Motor neuron (in vitro differentiated cells): ENCODE measurements at regions of chr21 and their contacts with region 1.

Region 1: DNA sequence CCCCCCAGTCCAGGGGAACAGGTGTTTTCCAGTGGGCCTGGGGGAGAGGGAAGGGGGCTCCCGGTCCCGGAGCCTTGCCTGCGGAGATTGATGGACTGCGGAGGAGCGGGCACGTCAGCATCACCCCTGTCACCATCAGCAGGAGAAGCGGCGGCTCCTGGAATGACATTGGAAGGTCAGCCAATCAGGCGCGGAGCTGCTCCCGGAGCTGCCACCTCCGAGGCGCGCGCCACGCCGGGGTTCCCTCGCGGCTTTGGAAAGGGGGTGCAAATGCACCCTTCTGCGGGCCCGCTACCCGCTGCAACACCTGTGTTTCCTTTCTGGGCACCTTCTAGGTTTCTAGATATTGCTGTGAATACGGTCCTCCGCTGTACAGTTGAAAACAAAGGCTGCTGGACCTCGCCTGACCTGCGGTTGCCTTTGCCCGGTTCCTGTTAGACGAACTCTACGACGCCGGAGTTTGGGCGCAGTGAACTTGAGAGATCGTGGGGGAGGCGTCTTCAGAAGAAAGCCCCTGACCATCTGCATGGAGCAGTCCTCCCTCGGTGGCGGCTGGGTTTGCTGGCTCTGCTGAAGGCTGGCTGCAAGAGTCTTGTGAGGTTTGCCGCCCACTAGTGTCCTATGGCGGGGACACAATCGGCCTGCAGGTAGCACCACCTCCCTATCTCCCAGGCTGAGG is 5.3 kb downstream of the DSCAM start:
- ATAC-seq: peak in 7 of 8 experiments; percentile 80 to 84 (median 81)
- H3K4me3 ChIP-seq: peak overlapping the region; percentile 24 to 40 (median 30)
- H3K27ac ChIP-seq: peak overlapping the region; percentile 62 to 86
- H3K4me1 ChIP-seq: peaks cover 42 to 60% of the 10 kb centered on the region in 2 donors

Region 2: DNA sequence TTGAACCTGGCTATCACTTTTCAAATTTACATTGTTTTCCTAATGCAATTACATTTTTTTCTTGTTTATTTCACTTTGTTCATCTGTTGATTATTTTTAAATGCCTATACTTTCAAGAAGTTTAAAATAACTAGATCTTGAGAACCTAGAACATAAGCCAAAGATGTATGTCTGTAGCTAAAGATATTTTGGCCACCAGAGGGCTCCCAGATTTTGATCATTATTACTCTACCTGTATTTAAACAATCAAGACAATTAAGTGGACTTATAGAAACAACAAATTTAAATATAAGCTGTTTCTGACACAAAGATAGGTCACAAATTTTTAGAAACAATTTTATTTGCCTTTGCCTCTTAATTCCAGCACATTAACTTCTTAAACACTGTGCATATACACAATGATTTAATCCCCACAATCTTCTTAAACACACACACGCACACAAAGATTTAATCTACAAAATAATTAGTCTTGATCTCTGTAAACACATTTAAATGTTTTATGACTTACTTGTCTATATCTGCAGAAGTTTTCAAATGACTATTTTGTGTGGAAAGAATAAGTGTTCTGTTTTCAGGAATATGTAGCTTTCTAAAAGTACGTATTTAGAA is 374.7 kb before region 1 on chr21:
- in situ Hi-C with region 1: loop called in 1 of 9 experiments (anchors 25 kb)
- ATAC-seq: no peak
- H3K4me3 ChIP-seq: no peak overlapping the region
- H3K27ac ChIP-seq: no peak overlapping the region
- H3K4me1 ChIP-seq: peaks cover 2 to 7% of the 10 kb centered on the region in 2 donors

Region 3: DNA sequence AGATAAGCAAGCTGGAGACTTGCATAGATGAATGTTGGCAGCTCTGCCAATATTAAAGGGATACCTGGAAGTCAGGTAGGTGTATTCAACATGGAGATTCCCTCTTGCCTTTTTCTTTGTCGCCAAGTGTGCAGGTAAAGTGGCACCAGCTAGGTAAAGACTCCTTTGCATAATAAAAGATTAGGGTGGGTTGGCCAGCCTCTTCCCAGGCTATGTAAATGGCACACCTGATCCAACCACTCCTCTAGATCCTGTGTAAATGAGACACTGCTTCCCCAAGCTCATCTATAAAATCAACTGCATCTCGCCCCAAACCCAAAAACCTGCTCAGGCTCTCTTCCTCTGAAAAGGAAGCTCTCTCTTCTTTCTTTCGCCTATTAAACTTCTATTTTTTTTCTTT is 106.0 kb after region 1 on chr21:
- in situ Hi-C with region 1: no loop called
- ATAC-seq: no peak
- H3K4me3 ChIP-seq: no peak overlapping the region
- H3K27ac ChIP-seq: no peak overlapping the region
- H3K4me1 ChIP-seq: no peaks in the 10 kb centered on the region

Region 4: DNA sequence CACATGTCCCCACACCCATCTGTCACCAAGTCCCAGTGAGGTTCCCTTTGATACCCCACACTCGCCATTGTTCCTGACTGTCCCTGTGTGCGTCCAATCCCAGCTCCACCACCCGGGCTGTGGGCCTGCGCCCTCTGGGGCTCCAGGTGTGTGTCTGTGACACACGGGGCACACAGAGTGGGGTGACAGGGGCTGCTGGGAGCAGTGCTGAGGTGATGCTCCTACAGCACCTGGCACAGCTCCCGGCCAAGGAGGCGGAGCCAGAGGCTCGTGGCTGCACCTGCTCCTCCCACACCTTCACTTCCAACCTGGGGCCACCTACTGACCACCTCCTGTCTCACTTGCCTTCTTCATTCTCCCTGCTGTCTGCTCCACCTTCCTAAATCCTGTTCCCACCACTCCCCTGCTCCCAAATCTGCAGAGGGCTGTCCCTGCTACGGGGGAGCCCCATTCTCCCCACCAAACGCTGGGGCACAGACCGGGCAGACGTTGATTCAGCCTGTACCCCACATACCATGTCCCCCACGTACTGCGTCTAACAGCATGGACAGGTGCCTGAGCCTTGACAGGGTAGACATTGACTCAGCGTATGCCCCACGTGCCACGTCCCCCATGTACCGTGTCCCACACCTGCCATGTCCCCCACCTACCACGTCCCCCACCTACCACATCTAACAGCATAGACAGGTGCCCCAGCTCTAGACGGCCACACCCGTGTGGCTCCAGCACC is 2021.3 kb after region 1 on chr21:
- in situ Hi-C with region 1: no loop called
- ATAC-seq: no peak
- H3K4me3 ChIP-seq: no peak overlapping the region
- H3K27ac ChIP-seq: no peak overlapping the region
- H3K4me1 ChIP-seq: no peaks in the 10 kb centered on the region